Right lobe of liver (tissue), 6 donors: ENCODE measurements at regions of chr9 and their contacts with region 1.

Region 1: DNA sequence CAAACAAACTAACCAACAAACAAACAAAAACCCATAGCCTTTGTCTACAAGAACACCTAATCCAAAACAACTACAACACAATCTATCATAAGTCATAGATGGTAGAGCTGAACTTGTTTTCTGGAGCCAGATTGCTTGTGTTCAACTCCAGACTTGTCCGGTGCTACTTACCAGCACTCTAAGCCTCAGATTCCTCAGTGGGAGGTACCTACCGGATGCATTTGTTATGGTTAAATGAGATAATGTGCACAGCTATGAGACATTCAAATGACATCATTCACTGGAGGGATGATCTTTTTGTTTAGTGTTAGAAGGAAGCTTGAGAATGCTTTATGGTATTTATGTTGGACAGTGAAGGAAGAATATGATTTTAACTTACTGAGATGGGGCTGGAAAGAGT is 592.9 kb upstream of the C9orf72 start:
- DNase-seq: no peak
- ATAC-seq: no peak
- H3K4me3 ChIP-seq: no peak overlapping the region
- H3K27ac ChIP-seq: no peak overlapping the region
- H3K4me1 ChIP-seq: no peaks in the 10 kb centered on the region
- H3K27me3 ChIP-seq: no peaks in the 10 kb centered on the region
- CTCF ChIP-seq: no peak
- POLR2A ChIP-seq: no peak

Region 2: DNA sequence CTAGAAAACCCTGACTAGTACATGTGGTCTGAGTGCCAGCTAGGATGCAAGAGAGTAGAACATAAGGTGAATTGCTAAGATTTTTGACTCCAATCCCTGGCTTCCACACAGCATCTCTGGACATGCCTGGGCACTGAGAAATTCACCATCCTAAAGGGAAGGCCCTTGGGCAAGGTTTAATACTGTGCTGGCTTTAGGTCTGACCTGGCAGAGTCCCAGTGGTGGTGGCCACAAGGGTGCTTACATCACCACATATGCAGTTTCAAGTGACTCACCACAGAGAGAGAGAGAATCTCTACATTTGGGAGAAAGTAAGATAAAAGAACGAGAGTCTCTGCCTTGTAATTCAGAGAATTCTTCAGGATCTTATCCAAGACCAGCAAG is 68.7 kb after region 1 on chr9:
- intact Hi-C with region 1: loop called in 1 of 2 experiments (anchors 5 kb)
- DNase-seq: no peak
- ATAC-seq: no peak
- H3K4me3 ChIP-seq: no peak overlapping the region
- H3K27ac ChIP-seq: no peak overlapping the region
- H3K4me1 ChIP-seq: no peaks in the 10 kb centered on the region
- H3K27me3 ChIP-seq: no peaks in the 10 kb centered on the region
- CTCF ChIP-seq: no peak
- POLR2A ChIP-seq: no peak